Heart left ventricle (tissue), 16 donors: ENCODE measurements at regions of chr17 and their contacts with region 1.

Region 1: DNA sequence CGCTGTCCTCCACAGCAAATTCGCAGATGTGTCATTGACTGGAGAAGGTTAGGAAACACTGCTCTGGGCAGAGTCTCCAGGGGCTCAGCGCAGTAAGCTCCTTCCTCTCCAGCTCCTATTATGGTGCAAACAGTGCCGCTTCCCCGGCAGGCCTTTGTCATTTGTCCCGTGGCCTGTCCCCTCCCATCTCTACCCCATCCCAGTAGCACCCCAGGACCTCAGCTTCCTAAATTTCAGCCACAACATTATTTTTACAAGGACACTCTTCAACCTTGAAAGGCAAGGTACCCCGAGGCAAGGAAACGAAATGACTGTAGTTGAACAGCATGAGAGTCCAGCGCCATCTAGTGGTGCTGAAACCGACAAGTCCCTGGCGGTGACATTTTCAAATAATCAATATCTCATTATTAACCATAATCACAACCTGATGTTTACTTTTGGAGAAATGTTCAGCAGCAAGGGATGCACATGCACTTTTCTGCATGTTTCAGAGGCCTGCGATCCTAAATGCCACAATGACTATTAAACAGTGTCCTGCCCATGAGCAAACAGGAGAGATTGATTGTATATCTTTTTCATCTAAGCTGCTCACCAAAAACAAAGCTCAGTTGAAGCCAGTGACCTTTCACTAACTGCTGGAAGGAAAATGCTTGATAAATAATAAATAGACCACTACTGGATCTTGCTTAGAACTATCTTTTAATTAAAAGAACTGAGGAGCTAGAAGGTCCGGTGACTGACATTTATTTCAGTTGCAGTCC is 16.5 kb downstream of the MRPS23 start:
- DNase-seq: peak; percentile 64 to 80 (median 76)
- ATAC-seq: peak; percentile 63 to 87 (median 81)
- H3K4me3 ChIP-seq: peak overlapping the region in 10 of 12 donors; percentile 24 to 58 (median 48)
- H3K27ac ChIP-seq: peak overlapping the region; percentile 58 to 95 (median 82)
- H3K4me1 ChIP-seq: peaks cover 0 to 46% (median 15%) of the 10 kb centered on the region in 12 donors
- H3K27me3 ChIP-seq: no peaks in the 10 kb centered on the region
- CTCF ChIP-seq: peak; percentile 85 to 97 (median 91)
- POLR2A ChIP-seq: no peak

Region 2: DNA sequence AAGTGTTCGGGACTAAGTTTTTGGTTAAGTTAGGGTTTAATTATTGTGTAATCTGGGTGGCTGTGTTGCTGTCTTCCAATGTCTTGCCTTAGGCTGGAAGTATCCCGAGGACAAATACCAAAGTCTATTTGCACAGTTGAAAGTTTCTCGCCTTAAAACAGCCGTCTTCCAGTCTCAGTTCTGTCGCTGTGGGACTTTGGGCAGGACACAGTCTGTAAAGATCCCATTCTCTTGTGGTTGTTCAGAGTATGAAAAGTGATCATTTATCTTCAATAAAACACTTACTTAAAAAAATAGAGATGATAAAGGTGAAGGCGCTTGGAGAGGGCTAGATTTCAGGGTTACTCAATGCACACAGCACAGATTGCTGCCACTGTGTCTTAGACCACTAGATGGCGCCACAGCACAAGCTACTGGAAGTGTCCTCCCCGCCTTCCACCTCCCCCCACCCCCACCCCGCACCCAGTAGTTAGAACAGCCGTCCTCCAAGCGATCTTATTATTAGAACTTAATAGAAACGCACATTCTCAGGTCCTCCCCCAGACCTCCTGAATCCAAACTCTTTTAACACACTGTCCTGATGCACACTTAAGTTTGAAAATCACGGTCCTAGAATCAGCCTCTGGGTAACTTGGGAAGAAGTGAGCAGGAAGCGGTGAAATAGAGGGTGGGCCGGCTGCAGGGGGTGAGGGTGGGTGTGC is 702.4 kb before region 1 on chr17:
- intact Hi-C with region 1: loop called (anchors 2 to 10 kb)
- DNase-seq: peak; percentile 79 to 87 (median 83)
- ATAC-seq: peak; percentile 89 to 93 (median 92)
- H3K4me3 ChIP-seq: peak overlapping the region in 2 of 12 donors; percentile 26 to 32
- H3K27ac ChIP-seq: no peak overlapping the region
- H3K4me1 ChIP-seq: peaks cover 0 to 7% (median 0%) of the 10 kb centered on the region in 12 donors
- H3K27me3 ChIP-seq: no peaks in the 10 kb centered on the region
- CTCF ChIP-seq: peak; percentile 85 to 95 (median 90)
- POLR2A ChIP-seq: no peak

Region 3: GRCh38 chr17:57255776-57256681 is 577.3 kb before region 1 on chr17 and contains the start of gene MSI2:
- intact Hi-C with region 1: loop called in 1 of 10 experiments (anchors 5 kb)
- DNase-seq: peak; percentile 94 to 97 (median 96)
- ATAC-seq: peak; percentile 76 to 94 (median 90)
- H3K4me3 ChIP-seq: peak within 1 kb of the TSS; percentile 78 to 98 (median 88)
- H3K27ac ChIP-seq: peak within 1 kb of the TSS; percentile 86 to 99 (median 98)
- H3K4me1 ChIP-seq: peaks cover 0 to 40% (median 19%) of the 10 kb centered on the region in 12 donors
- H3K27me3 ChIP-seq: no peaks in the 10 kb centered on the region
- CTCF ChIP-seq: peak in 2 of 12 donors; percentile 3 to 8
- POLR2A ChIP-seq: peak in 1 of 2 donors; percentile 21
- total RNA-seq, gene MSI2: 43.2 to 120 (median 104) TPM

Region 4: DNA sequence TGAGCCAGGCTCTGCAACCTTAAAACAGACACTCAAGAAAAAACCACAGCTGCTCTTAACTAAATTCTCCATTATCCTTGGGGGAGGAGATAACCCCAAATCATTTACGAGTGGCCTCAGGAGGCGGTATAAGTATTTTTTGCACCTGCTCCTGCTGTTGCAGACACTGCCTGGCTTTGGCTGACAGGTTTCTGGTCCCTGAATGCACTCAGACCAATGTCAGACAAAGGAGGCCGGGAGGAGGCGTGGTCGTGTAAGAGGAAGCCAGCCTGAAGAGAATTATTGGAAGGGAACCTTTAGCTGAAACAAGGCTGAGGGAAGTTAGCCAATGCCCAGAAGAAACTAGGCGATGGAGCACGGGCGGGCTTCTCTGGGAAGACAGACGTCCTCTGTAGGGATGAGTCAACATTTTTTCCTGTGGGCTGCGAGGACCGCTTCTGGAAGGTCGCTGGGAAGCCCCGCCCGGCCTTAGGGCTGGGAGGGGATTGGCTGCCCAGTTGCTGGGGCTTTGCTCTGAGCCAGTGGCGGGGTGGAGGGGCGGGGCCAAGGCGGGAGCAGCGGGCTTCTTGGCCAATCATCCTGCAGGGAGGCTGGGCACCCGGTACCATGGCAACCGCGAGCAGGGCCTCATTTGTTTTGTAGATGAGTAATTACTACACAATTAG is 170.6 kb before region 1 on chr17:
- intact Hi-C with region 1: loop called in 1 of 10 experiments (anchors 10 kb)
- DNase-seq: peak; percentile 95 to 99 (median 97)
- ATAC-seq: peak; percentile 97 to 98 (median 98)
- H3K4me3 ChIP-seq: peak overlapping the region in 10 of 12 donors; percentile 18 to 50 (median 38)
- H3K27ac ChIP-seq: peak overlapping the region; percentile 20 to 93 (median 84)
- H3K4me1 ChIP-seq: peaks cover 2 to 47% (median 23%) of the 10 kb centered on the region in 12 donors
- H3K27me3 ChIP-seq: no peaks in the 10 kb centered on the region
- CTCF ChIP-seq: peak in 4 of 12 donors; percentile 5 to 30 (median 11)
- POLR2A ChIP-seq: peak in 1 of 2 donors; percentile 55

Region 5: GRCh38 chr17:57747221-57748017 is 85.9 kb before region 1 on chr17:
- intact Hi-C with region 1: loop called in 1 of 10 experiments (anchors 10 kb)
- DNase-seq: no peak
- ATAC-seq: peak; percentile 37 to 62 (median 44)
- H3K4me3 ChIP-seq: no peak overlapping the region
- H3K27ac ChIP-seq: no peak overlapping the region
- H3K4me1 ChIP-seq: peaks cover 0 to 7% (median 0%) of the 10 kb centered on the region in 12 donors
- H3K27me3 ChIP-seq: peaks cover 0 to 3% (median 0%) of the 10 kb centered on the region in 9 donors
- CTCF ChIP-seq: peak; percentile 51 to 83 (median 74)
- POLR2A ChIP-seq: no peak

Region 6: GRCh38 chr17:57849874-57850754 is 16.8 kb after region 1 on chr17 and contains the start of gene MRPS23:
- intact Hi-C with region 1: loop called in 1 of 10 experiments (anchors 2 kb)
- DNase-seq: peak; percentile 98 to 99 (median 99)
- ATAC-seq: peak; percentile 74 to 91 (median 88)
- H3K4me3 ChIP-seq: peak within 1 kb of the TSS; percentile 57 to 98 (median 82)
- H3K27ac ChIP-seq: peak within 1 kb of the TSS; percentile 88 to 97 (median 94)
- H3K4me1 ChIP-seq: peaks cover 4 to 68% (median 35%) of the 10 kb centered on the region in 12 donors
- H3K27me3 ChIP-seq: no peaks in the 10 kb centered on the region
- CTCF ChIP-seq: no peak
- POLR2A ChIP-seq: peak; percentile 40 to 83
- total RNA-seq, gene MRPS23: 44.6 to 99.3 (median 71.8) TPM